ENCODE measurements at regions of chr3 and their contacts with region 1.

Region 1: GRCh38 chr3:194682694-194683310 is 2.9 kb upstream of the FAM43A start:
- DNase-seq: peak; percentile 54 to 74
- H3K4me3 ChIP-seq: no peak overlapping the region
- H3K27ac ChIP-seq: no peak overlapping the region
- H3K4me1 ChIP-seq: peaks cover 0 to 10% (median 9%) of the 10 kb centered on the region in 4 experiments; a peak in 6 of 7 replicates
- H3K27me3 ChIP-seq: peaks cover 7 to 36% (median 29%) of the 10 kb centered on the region in 4 experiments
- CTCF ChIP-seq: peak; percentile 52 to 96 (median 95)
- EP300 ChIP-seq: 0 out of 3 replicates have a peak, but pooled peaks of 1 of the 2 experiments have one; percentile 14
- POLR2A ChIP-seq: no peak
- RAD21 ChIP-seq: peak; percentile 95 to 99

Region 2: DNA sequence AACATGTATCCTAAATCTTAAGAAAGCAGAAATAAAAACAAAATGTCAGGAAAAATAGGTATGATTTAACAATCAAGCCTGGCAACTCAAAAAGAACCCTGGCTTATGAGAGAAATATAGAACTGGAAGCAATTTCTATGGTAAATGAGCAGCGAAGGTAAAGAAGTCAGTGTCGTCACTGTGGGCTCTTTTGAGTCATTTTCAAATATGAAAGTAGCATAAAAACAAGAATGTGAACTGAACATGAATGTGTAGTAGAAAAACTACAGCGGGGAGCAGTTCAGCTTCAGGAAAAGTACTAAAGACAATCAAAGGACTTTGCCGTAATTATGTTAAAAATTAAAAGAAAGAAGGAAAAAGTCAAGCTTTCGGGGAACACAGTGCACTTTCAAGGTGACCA is 28.4 kb before region 1 on chr3:
- CTCF ChIA-PET with region 1: no interaction called
- POLR2A ChIA-PET with region 1: no interaction called
- DNase-seq: no peak
- H3K4me3 ChIP-seq: no peak overlapping the region
- H3K27ac ChIP-seq: no peak overlapping the region
- H3K4me1 ChIP-seq: peaks cover 0 to 5% (median 0%) of the 10 kb centered on the region in 4 experiments; a peak in 2 of 7 replicates
- H3K27me3 ChIP-seq: no peaks in the 10 kb centered on the region
- CTCF ChIP-seq: no peak
- EP300 ChIP-seq: no peak
- POLR2A ChIP-seq: no peak
- RAD21 ChIP-seq: no peak

Region 3: GRCh38 chr3:194671900-194672808 is 10.6 kb before region 1 on chr3 and contains the start of gene LSG1:
- CTCF ChIA-PET with region 1: interaction called, 110 read pairs
- POLR2A ChIA-PET with region 1: interaction called, 30 read pairs
- DNase-seq: peak; percentile 75 to 86
- H3K4me3 ChIP-seq: peak within 1 kb of the TSS; percentile 77 to 99 (median 93)
- H3K27ac ChIP-seq: peak within 1 kb of the TSS; percentile 94
- H3K4me1 ChIP-seq: peaks cover 0 to 4% (median under 1%) of the 10 kb centered on the region in 4 experiments; a peak in 4 of 7 replicates
- H3K27me3 ChIP-seq: peaks cover 0 to 2% (median 0%) of the 10 kb centered on the region in 4 experiments; a peak in 2 of 7 replicates
- CTCF ChIP-seq: no peak
- EP300 ChIP-seq: peak in 1 of 2 experiments; percentile 95; a peak in 2 of 3 replicates
- POLR2A ChIP-seq: peak; percentile 69 to 75
- RAD21 ChIP-seq: no peak
- total RNA-seq, gene LSG1: 47.6 and 49.9 TPM in 2 replicates

Region 4: GRCh38 chr3:194749631-194750490 is 67.1 kb after region 1 on chr3:
- CTCF ChIA-PET with region 1: interaction called, 19 read pairs
- POLR2A ChIA-PET with region 1: no interaction called
- DNase-seq: no peak
- H3K4me3 ChIP-seq: no peak overlapping the region
- H3K27ac ChIP-seq: no peak overlapping the region
- H3K4me1 ChIP-seq: peaks cover 12 to 22% (median 16%) of the 10 kb centered on the region in 4 experiments
- H3K27me3 ChIP-seq: no peaks in the 10 kb centered on the region
- CTCF ChIP-seq: no peak
- EP300 ChIP-seq: no peak
- POLR2A ChIP-seq: no peak
- RAD21 ChIP-seq: no peak

Region 5: DNA sequence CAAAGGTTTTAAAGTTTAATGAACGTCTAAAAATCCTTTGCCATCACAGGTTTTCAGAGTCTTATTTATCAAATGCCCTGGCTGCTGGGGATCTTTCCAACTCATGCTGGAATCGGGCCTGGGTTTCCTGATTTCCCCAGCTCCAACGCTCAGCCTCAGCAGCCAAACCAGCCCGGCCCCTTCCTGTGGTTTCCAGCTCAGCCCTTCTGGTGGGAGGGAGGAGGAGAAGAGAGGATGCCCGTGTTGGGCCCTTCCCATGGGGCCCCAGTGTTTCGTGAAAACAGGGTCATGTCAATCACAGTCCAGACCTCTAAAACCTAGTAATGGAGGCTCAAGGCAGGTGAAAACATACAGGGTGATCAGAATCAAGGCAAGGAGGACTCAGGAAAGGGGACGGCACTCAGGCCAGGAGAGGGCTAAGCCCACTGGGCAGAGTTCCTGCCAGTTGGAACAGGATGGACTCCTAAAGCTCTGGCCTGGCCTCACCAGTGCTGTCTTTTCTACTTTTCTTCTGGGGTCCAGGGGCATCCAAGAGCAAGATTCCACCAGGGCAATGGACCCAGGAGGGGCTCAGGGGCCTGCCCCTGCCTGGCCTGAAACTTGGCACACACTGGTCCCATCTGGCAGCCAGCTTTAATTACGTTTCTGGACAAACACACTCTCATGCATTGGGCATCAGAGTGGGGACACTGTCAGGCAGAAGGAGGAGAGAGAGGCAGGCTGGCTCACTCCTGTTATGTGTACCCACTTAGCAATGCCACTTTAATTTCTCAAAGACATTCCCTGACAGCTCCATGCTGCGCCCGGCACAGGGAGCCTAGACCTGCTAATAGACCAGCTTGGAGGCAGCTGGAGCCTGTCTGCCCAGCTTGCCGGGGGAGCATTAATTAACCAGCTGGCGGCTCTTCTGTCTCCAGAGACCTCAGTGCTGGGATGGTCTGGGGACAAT is 197.5 kb after region 1 on chr3:
- CTCF ChIA-PET with region 1: interaction called, 12 read pairs
- POLR2A ChIA-PET with region 1: interaction called, 4 read pairs
- DNase-seq: peak in 1 of 2 experiments; percentile 41
- H3K4me3 ChIP-seq: no peak overlapping the region
- H3K27ac ChIP-seq: no peak overlapping the region
- H3K4me1 ChIP-seq: no peaks in the 10 kb centered on the region; a peak in 1 of 7 replicates
- H3K27me3 ChIP-seq: no peaks in the 10 kb centered on the region; a peak in 1 of 7 replicates
- CTCF ChIP-seq: no peak
- EP300 ChIP-seq: no peak
- POLR2A ChIP-seq: no peak
- RAD21 ChIP-seq: no peak

Region 6: DNA sequence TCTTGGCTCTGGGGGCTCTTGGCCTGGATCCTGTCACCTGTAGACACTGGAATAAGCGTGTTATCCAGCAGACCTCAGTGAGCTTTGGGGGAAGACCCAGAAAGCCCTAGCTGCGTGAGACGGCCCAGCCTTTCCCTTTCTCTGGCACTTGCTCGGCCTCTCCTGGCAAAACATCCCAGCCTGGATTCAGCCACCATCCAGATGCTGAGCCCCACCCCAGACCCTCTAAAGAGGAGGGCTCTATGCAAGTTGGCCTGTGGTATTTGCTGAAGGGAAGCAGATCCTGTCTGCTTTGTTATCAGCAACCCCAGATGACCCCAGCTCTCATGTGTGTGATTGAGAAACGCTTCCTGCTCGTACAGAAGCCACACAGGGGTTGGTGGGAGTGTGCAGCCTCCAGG is 270.0 kb after region 1 on chr3:
- CTCF ChIA-PET with region 1: interaction called, 24 read pairs
- POLR2A ChIA-PET with region 1: no interaction called
- DNase-seq: no peak
- H3K4me3 ChIP-seq: no peak overlapping the region
- H3K27ac ChIP-seq: no peak overlapping the region
- H3K4me1 ChIP-seq: peaks cover 0 to 3% (median 0%) of the 10 kb centered on the region in 4 experiments; a peak in 1 of 7 replicates
- H3K27me3 ChIP-seq: no peaks in the 10 kb centered on the region; a peak in 1 of 7 replicates
- CTCF ChIP-seq: no peak
- EP300 ChIP-seq: no peak
- POLR2A ChIP-seq: no peak
- RAD21 ChIP-seq: no peak

Region 7: GRCh38 chr3:194985031-194985578 is 302.3 kb after region 1 on chr3:
- CTCF ChIA-PET with region 1: interaction called, 20 read pairs
- POLR2A ChIA-PET with region 1: interaction called, 5 read pairs
- DNase-seq: peak; percentile 75 to 82
- H3K4me3 ChIP-seq: peak overlapping the region in 3 of 4 experiments; percentile 11 to 40 (median 23); a peak in 5 of 8 replicates
- H3K27ac ChIP-seq: no peak overlapping the region
- H3K4me1 ChIP-seq: peaks cover 0 to 7% (median 5%) of the 10 kb centered on the region in 4 experiments; a peak in 3 of 7 replicates
- H3K27me3 ChIP-seq: peaks cover 0 to 7% (median 2%) of the 10 kb centered on the region in 4 experiments; a peak in 2 of 7 replicates
- CTCF ChIP-seq: peak; percentile 52 to 88 (median 75)
- EP300 ChIP-seq: no peak
- POLR2A ChIP-seq: 0 out of 3 replicates have a peak, but pooled peaks of 1 of the 2 experiments have one; percentile 30
- RAD21 ChIP-seq: peak; percentile 65 to 70

Region 8: GRCh38 chr3:195260280-195260905 is 577.6 kb after region 1 on chr3:
- CTCF ChIA-PET with region 1: interaction called, 11 read pairs
- POLR2A ChIA-PET with region 1: interaction called, 9 read pairs
- DNase-seq: peak in 1 of 2 experiments; percentile 90
- H3K4me3 ChIP-seq: peak overlapping the region; percentile 35 to 69 (median 59)
- H3K27ac ChIP-seq: no peak overlapping the region
- H3K4me1 ChIP-seq: peaks cover 7 to 28% (median 16%) of the 10 kb centered on the region in 4 experiments
- H3K27me3 ChIP-seq: no peaks in the 10 kb centered on the region
- CTCF ChIP-seq: no peak
- EP300 ChIP-seq: no peak
- POLR2A ChIP-seq: no peak
- RAD21 ChIP-seq: no peak

Measured in H1 (cell line).